WTC11 (cell line): ENCODE measurements at regions of chr20 and their contacts with region 1.

Region 1: DNA sequence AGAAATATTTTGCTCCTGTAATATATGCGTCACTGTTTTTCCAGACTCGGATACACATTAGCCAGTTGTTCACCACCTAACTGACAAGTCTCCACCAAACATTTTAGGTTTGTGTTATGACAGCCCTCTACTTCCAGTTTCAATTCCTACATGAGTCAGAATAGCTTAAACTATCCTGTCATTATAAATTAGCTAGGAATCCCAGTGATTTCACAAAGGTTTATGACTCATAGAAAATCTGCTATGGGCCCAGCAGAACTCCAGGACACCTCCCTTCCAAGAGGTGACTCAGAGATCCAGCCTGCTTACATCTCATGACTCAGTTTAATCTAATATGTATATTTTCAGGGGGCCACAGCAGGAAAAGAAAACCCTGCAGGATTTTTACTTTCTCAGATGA is 17.4 kb upstream of the PLCB4 start:
- DNase-seq: no peak
- ATAC-seq: no peak
- H3K4me3 Mint-ChIP-seq: no peak overlapping the region
- H3K27ac Mint-ChIP-seq: no peak overlapping the region
- H3K4me1 Mint-ChIP-seq: peaks cover 11% of the 10 kb centered on the region
- H3K27me3 Mint-ChIP-seq: no peaks in the 10 kb centered on the region
- CTCF ChIP-seq: no peak

Region 2: GRCh38 chr20:9035129-9035528 is 16.4 kb before region 1 on chr20:
- CTCF ChIA-PET with region 1: no interaction called
- POLR2A ChIA-PET with region 1: no interaction called
- DNase-seq: no peak
- ATAC-seq: no peak
- H3K4me3 Mint-ChIP-seq: no peak overlapping the region
- H3K27ac Mint-ChIP-seq: no peak overlapping the region
- H3K4me1 Mint-ChIP-seq: peaks cover 3% of the 10 kb centered on the region; the same call in 1 of the 2 replicates
- H3K27me3 Mint-ChIP-seq: no peaks in the 10 kb centered on the region; the same call in 1 of the 2 replicates
- CTCF ChIP-seq: no peak

Region 3: GRCh38 chr20:9348747-9349146 is 297.2 kb after region 1 on chr20:
- CTCF ChIA-PET with region 1: no interaction called
- POLR2A ChIA-PET with region 1: interaction called, 10 read pairs
- DNase-seq: no peak
- ATAC-seq: no peak
- H3K4me3 Mint-ChIP-seq: no peak overlapping the region
- H3K27ac Mint-ChIP-seq: peak overlapping the region; percentile 44; the same call in 1 of the 2 replicates
- H3K4me1 Mint-ChIP-seq: peaks cover 27% of the 10 kb centered on the region
- H3K27me3 Mint-ChIP-seq: no peaks in the 10 kb centered on the region
- CTCF ChIP-seq: no peak